Activated T-helper 1 cell treated with anti-CD3 and anti-CD28 coated beads, Interleukin-12 subunit alpha, Interleukin-12 subunit beta, Interleukin-2, Interleukin-4 antibody, amounts not matched to agents 30 ng/mL and 10 ng/mL and 1 ng/mL, durations not matched to agents 14 hours and 24 hours and 36 hours (primary cell): ENCODE measurements at regions of chr6 and their contacts with region 1.

Region 1: DNA sequence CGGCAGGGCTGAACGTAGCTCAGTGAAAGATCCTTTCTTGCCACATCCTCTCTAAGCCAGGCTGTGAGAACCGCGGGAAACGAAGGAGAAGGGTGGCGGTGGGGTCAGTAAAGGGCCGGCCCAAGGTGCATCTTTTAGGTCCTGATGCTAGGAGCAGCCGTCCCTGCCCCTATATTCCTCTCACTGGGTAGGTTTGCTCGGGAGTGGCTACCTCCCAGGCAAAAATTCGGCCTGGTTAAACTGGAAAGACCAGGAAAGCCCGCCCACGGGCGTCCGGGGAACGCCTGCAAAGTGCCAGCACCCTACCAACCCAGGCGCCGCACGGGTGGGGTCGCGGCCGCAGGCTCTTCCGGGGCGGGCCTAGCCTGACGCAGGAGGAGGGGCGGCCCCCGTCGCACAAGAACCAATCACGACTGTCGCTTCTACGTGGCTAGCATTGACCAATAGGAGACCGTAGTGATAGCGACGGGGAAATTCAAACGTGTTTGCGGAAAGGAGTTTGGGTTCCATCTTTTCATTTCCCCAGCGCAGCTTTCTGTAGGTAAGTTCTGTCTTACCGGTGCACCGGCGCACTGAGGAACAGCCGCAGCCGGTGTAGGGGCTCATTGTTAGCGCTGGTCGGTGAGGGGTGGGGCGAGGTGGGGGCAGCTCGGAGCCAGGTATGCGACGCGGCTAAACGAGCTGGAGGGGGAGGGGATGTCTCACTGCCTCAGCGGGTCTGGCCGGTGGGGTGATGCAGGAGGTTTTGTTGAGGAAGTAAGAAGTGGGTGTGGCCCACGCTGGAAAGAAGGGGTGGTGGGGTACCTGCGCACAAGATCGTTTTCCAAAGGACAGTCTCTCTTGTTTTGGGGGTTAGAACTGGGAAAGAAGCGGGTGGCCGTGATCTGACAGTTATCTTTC is at the start of gene TTK:
- DNase-seq: peak; percentile 92
- H3K4me3 Mint-ChIP-seq: peak within 1 kb of the TSS; percentile 95
- H3K27ac Mint-ChIP-seq: peak within 1 kb of the TSS; percentile 94
- H3K4me1 Mint-ChIP-seq: peaks cover 50% of the 10 kb centered on the region
- H3K27me3 Mint-ChIP-seq: no peaks in the 10 kb centered on the region
- total RNA-seq, gene TTK: 22.4 and 23.5 TPM in 2 replicates

Region 2: GRCh38 chr6:79536954-79537747 is 467.3 kb before region 1 on chr6 and contains the start of gene LCA5:
- intact Hi-C with region 1: loop called (anchors 2 kb)
- DNase-seq: peak; percentile 81
- H3K4me3 Mint-ChIP-seq: no peak within 1 kb of the TSS
- H3K27ac Mint-ChIP-seq: no peak within 1 kb of the TSS
- H3K4me1 Mint-ChIP-seq: no peaks in the 10 kb centered on the region
- H3K27me3 Mint-ChIP-seq: peaks cover 17% of the 10 kb centered on the region
- total RNA-seq, gene LCA5: 0.08 and 0.17 TPM in 2 replicates

Region 3: GRCh38 chr6:79564636-79565035 is 439.8 kb before region 1 on chr6:
- intact Hi-C with region 1: no loop called
- DNase-seq: no peak
- H3K4me3 Mint-ChIP-seq: no peak overlapping the region
- H3K27ac Mint-ChIP-seq: no peak overlapping the region
- H3K4me1 Mint-ChIP-seq: no peaks in the 10 kb centered on the region
- H3K27me3 Mint-ChIP-seq: peaks cover 13% of the 10 kb centered on the region

Region 4: DNA sequence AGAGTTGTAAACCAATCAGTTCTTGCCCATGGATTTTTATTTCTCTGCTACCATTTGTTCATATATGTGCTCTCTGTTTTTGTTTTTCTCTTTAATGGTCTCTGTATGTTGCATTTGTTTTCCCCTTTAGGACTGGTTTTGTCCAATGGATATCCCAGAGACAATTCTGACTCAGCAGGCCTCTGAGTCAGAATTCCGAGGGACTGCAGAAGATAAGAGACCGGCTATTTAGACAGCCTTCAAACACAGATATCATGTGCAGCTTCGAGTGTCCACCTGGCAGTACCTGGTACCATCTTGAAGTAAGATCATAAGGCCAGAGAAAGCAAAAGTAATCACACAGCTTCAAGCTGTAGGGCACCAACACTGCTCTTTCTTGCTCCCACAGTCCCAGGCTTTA is 182.6 kb before region 1 on chr6:
- intact Hi-C with region 1: no loop called
- DNase-seq: no peak
- H3K4me3 Mint-ChIP-seq: no peak overlapping the region
- H3K27ac Mint-ChIP-seq: no peak overlapping the region
- H3K4me1 Mint-ChIP-seq: no peaks in the 10 kb centered on the region
- H3K27me3 Mint-ChIP-seq: peaks cover 9% of the 10 kb centered on the region

Region 5: DNA sequence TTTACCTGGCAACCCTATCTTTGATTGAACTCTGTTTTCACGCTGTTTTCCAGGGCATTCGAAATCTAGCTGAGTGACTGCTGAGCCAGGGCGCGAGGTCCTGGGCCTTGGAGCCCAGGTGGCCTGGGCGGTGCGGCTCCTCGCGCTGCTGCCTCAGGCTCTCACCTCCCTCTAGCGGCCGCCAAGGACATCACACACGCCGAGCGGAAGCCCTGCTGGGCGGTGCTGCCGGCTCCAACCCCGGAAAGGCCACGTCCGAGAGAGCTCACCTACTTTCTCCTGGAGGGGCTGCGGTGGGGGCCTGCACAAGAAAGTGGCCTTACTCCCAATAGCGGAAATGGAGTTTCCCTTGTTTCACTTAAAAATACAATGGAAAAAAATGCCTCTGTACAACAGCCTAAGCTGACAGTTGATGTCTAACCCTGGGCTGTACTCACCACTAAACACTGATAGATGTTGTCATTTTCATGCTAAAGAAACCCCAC is 134.8 kb before region 1 on chr6:
- intact Hi-C with region 1: loop called (anchors 1 kb)
- DNase-seq: peak; percentile 72
- H3K4me3 Mint-ChIP-seq: no peak overlapping the region
- H3K27ac Mint-ChIP-seq: no peak overlapping the region
- H3K4me1 Mint-ChIP-seq: peaks cover 9% of the 10 kb centered on the region
- H3K27me3 Mint-ChIP-seq: peaks cover 5% of the 10 kb centered on the region

Region 6: DNA sequence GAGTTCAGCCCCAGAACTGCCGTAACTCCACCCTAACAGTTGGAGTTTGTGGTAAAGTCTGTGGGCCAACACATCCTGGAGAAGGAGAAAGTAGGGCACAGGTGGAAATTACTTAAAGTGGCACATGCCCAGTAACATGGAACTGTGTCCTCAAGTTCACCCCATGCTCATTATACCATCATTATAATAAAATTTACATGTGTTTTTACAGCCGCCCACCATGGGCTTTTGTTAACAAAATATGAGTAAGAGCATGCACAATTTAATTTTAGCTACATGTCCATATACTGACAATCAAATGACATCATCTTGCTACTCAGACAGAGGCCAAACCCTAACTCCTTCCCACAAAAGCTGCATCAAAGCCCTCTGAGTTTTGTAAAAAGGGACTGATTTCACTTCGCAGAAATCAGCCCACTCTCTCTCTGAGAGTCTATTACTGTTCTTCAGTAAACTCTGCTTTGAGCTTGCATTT is 39.8 kb before region 1 on chr6:
- intact Hi-C with region 1: no loop called
- DNase-seq: no peak
- H3K4me3 Mint-ChIP-seq: no peak overlapping the region
- H3K27ac Mint-ChIP-seq: no peak overlapping the region
- H3K4me1 Mint-ChIP-seq: no peaks in the 10 kb centered on the region
- H3K27me3 Mint-ChIP-seq: peaks cover 21% of the 10 kb centered on the region

Region 7: GRCh38 chr6:80106418-80107235 is 102.2 kb after region 1 on chr6 and contains the start of gene BCKDHB:
- intact Hi-C with region 1: loop called (anchors 1 kb)
- DNase-seq: peak; percentile 98
- H3K4me3 Mint-ChIP-seq: peak within 1 kb of the TSS; percentile 96
- H3K27ac Mint-ChIP-seq: peak within 1 kb of the TSS; percentile 90
- H3K4me1 Mint-ChIP-seq: peaks cover 31% of the 10 kb centered on the region
- H3K27me3 Mint-ChIP-seq: peaks cover 2% of the 10 kb centered on the region
- total RNA-seq, gene BCKDHB: 13.3 and 14.4 TPM in 2 replicates

Region 8: GRCh38 chr6:81752138-81752920 is 1747.9 kb after region 1 on chr6 and contains the start of gene TENT5A:
- intact Hi-C with region 1: loop called (anchors 1 kb)
- DNase-seq: peak; percentile 78
- H3K4me3 Mint-ChIP-seq: peak within 1 kb of the TSS; percentile 88
- H3K27ac Mint-ChIP-seq: peak within 1 kb of the TSS; percentile 72
- H3K4me1 Mint-ChIP-seq: peaks cover 16% of the 10 kb centered on the region
- H3K27me3 Mint-ChIP-seq: peaks cover 43% of the 10 kb centered on the region
- total RNA-seq, gene TENT5A: 0.34 and 0.47 TPM in 2 replicates